PC-3 (cell line): ENCODE measurements at regions of chr9 and their contacts with region 1.

Region 1: GRCh38 chr9:22452415-22453010 is 5.9 kb downstream of the DMRTA1 start:
- DNase-seq: peak; percentile 67
- ATAC-seq: no peak
- H3K4me3 ChIP-seq: no peak overlapping the region
- H3K27ac ChIP-seq: no peak overlapping the region
- H3K4me1 ChIP-seq: peaks cover 22% of the 10 kb centered on the region
- H3K27me3 ChIP-seq: no peaks in the 10 kb centered on the region
- CTCF ChIP-seq: peak; percentile 82

Region 2: GRCh38 chr9:22307013-22307711 is 145.4 kb before region 1 on chr9:
- CTCF ChIA-PET with region 1: interaction called, 23 read pairs
- POLR2A ChIA-PET with region 1: interaction called, 10 read pairs
- intact Hi-C with region 1: loop called (anchors 1 kb)
- DNase-seq: peak; percentile 71
- ATAC-seq: peak; percentile 45
- H3K4me3 ChIP-seq: no peak overlapping the region
- H3K27ac ChIP-seq: no peak overlapping the region
- H3K4me1 ChIP-seq: no peaks in the 10 kb centered on the region; the same call in 1 of the 2 replicates
- H3K27me3 ChIP-seq: no peaks in the 10 kb centered on the region
- CTCF ChIP-seq: peak; percentile 85

Region 3: DNA sequence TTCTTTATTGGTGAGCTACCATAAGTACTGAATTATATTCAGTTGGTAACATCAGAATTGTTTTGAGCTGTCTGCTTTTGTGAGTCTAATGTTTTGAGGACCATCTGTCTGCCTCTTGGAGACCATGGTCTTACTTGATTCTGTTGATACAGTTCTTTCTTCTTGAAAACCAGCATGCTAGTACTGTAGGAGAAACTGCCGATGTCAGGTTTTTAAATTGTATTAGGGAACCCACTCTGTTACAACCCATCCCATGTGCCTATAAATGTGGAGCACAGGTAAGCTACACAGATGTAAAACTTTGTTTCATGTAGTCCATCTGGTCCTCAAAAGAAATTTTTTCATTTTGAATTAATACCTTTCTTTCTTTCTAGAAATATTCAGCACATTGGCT is 109.3 kb before region 1 on chr9:
- CTCF ChIA-PET with region 1: no interaction called
- POLR2A ChIA-PET with region 1: no interaction called
- intact Hi-C with region 1: no loop called
- DNase-seq: no peak
- ATAC-seq: no peak
- H3K4me3 ChIP-seq: peak overlapping the region; percentile 18; the same call in 1 of the 2 replicates
- H3K27ac ChIP-seq: peak overlapping the region; percentile 83
- H3K4me1 ChIP-seq: peaks cover 25% of the 10 kb centered on the region
- H3K27me3 ChIP-seq: no peaks in the 10 kb centered on the region
- CTCF ChIP-seq: no peak